ENCODE measurements at regions of chr22 and their contacts with region 1.

Region 1: DNA sequence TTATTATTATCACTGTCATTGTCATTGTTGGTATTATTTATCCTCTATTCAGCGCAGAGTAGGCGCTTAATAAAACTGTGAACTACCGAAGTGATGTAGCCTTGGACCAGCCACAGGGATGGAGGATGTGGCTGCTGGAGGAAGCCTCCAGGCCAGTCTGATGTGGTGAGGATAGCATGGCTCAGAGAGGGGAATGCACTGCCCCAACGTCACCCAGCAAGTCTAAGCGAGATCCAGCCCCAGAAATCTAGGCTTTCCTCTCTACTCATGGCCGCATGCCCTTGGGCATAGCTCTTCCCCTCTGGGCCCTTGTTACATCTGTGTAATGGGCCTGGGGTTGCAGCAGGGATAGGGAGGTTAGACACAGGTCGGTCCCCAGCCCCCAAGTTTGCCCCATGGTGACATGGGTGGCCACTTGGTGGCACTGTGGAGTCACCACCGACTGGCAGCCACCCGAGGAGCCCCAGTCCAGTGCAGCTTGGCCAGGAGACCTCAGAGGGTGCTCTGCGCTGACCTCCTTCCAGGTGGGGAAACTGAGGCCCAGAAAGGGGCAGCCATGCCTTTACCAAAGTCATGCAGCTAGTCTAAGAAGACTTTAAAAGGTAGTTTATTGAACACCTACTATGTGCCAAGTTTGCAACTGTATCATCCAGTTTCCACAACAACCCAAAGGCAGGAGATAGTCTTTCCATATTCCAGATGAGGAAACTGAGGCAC is 395.7 kb downstream of the MN1 start:
- DNase-seq: peak; percentile 25 to 89
- H3K4me3 ChIP-seq: no peak overlapping the region
- H3K27ac ChIP-seq: no peak overlapping the region
- H3K4me1 ChIP-seq: peaks cover 0 to 4% (median 1%) of the 10 kb centered on the region in 4 experiments; a peak in 4 of 7 replicates
- H3K27me3 ChIP-seq: no peaks in the 10 kb centered on the region
- CTCF ChIP-seq: peak; percentile 89 to 95 (median 90)
- EP300 ChIP-seq: no peak
- POLR2A ChIP-seq: no peak
- RAD21 ChIP-seq: peak; percentile 94 to 97

Region 2: GRCh38 chr22:27223317-27224177 is 182.3 kb before region 1 on chr22:
- CTCF ChIA-PET with region 1: no interaction called
- POLR2A ChIA-PET with region 1: no interaction called
- DNase-seq: no peak
- H3K4me3 ChIP-seq: no peak overlapping the region
- H3K27ac ChIP-seq: no peak overlapping the region
- H3K4me1 ChIP-seq: peaks cover 0 to 3% (median 0%) of the 10 kb centered on the region in 4 experiments; a peak in 1 of 7 replicates
- H3K27me3 ChIP-seq: no peaks in the 10 kb centered on the region
- CTCF ChIP-seq: no peak
- EP300 ChIP-seq: no peak
- POLR2A ChIP-seq: no peak
- RAD21 ChIP-seq: no peak

Region 3: DNA sequence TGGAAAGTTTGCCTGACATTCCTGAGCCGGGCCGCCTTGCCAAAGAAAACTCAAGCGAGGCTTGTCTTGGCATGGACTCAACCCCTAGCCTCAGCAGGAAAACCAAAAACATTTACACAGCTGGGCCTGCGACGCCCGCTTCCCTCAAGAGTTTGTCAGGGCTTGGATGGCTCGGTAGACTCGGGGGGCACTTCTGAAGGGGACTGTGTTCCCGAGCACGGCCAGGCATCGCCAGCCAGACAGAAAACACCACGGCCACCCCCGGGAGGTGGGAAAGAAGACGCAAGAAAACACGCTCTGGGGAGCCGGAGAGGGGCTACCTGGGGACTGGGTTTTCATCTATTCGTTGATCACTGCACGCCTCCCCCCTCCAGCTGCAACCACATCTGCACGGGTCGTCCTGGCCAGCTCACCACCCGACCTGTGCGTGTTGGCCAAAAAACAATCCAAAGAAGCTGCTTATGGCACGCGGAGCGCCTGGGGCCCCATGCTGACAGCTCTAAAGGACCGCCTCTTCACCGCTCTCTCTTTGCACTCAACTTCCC is 15.1 kb after region 1 on chr22:
- CTCF ChIA-PET with region 1: interaction called, 14 read pairs
- POLR2A ChIA-PET with region 1: interaction called, 3 read pairs
- DNase-seq: no peak
- H3K4me3 ChIP-seq: no peak overlapping the region
- H3K27ac ChIP-seq: no peak overlapping the region
- H3K4me1 ChIP-seq: peaks cover 2 to 23% (median 13%) of the 10 kb centered on the region in 4 experiments
- H3K27me3 ChIP-seq: no peaks in the 10 kb centered on the region
- CTCF ChIP-seq: no peak
- EP300 ChIP-seq: no peak
- POLR2A ChIP-seq: no peak
- RAD21 ChIP-seq: no peak

Region 4: GRCh38 chr22:27627444-27627833 is 221.6 kb after region 1 on chr22:
- CTCF ChIA-PET with region 1: interaction called, 11 read pairs
- POLR2A ChIA-PET with region 1: no interaction called
- DNase-seq: no peak
- H3K4me3 ChIP-seq: no peak overlapping the region
- H3K27ac ChIP-seq: no peak overlapping the region
- H3K4me1 ChIP-seq: peaks cover 6 to 20% (median 10%) of the 10 kb centered on the region in 4 experiments
- H3K27me3 ChIP-seq: no peaks in the 10 kb centered on the region
- CTCF ChIP-seq: peak; percentile 34 to 65 (median 59); a peak in 3 of 4 replicates
- EP300 ChIP-seq: no peak
- POLR2A ChIP-seq: no peak
- RAD21 ChIP-seq: peak; percentile 56 to 61

Region 5: GRCh38 chr22:27682437-27682836 is 276.6 kb after region 1 on chr22:
- CTCF ChIA-PET with region 1: interaction called, 15 read pairs
- POLR2A ChIA-PET with region 1: no interaction called
- DNase-seq: peak in 1 of 2 experiments; percentile 80
- H3K4me3 ChIP-seq: no peak overlapping the region
- H3K27ac ChIP-seq: no peak overlapping the region
- H3K4me1 ChIP-seq: peaks cover 0 to 10% (median 7%) of the 10 kb centered on the region in 4 experiments; a peak in 4 of 7 replicates
- H3K27me3 ChIP-seq: no peaks in the 10 kb centered on the region
- CTCF ChIP-seq: peak; percentile 67 to 95 (median 87)
- EP300 ChIP-seq: no peak
- POLR2A ChIP-seq: no peak
- RAD21 ChIP-seq: peak; percentile 63 to 74

Region 6: GRCh38 chr22:27804470-27805297 is 398.9 kb after region 1 on chr22:
- CTCF ChIA-PET with region 1: interaction called, 14 read pairs
- POLR2A ChIA-PET with region 1: no interaction called
- DNase-seq: peak in 1 of 2 experiments; percentile 86
- H3K4me3 ChIP-seq: peak overlapping the region in 3 of 4 experiments; percentile 15 to 37 (median 21); a peak in 5 of 8 replicates
- H3K27ac ChIP-seq: no peak overlapping the region
- H3K4me1 ChIP-seq: peaks cover 0 to 23% (median 18%) of the 10 kb centered on the region in 4 experiments; a peak in 6 of 7 replicates
- H3K27me3 ChIP-seq: peaks cover 23 to 40% (median 36%) of the 10 kb centered on the region in 4 experiments
- CTCF ChIP-seq: peak; percentile 74 to 81 (median 80)
- EP300 ChIP-seq: no peak
- POLR2A ChIP-seq: no peak
- RAD21 ChIP-seq: peak; percentile 90